ENCODE measurements at regions of chr7 and their contacts with region 1.

Region 1: DNA sequence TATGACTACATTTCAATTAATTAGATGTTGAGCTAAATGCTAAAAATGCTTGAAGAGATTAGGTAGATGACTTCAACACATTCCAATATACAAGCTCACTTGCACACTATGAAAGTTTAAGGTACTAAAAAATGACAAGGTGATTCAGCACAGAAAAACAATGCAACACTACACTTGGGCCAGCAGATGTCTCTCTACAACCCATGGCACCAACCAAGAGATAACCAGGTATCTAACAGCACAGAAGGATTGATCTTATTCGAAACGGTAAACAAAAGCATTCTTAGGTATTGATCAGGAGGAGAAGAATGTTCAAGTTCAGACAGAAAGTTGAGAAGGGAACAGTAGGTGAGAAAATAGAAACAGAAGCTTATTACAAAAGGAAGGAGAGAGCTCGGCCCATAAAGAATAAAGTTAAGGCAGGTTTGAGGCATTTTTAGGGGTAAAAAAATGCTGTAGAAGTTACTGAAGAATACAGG is 248.2 kb upstream of the KLF14 start:
- DNase-seq: no peak
- ATAC-seq: peak; percentile 94
- H3K4me3 Mint-ChIP-seq: no peak overlapping the region
- H3K27ac Mint-ChIP-seq: no peak overlapping the region
- H3K4me1 Mint-ChIP-seq: peaks cover 21% of the 10 kb centered on the region
- H3K27me3 Mint-ChIP-seq: no peaks in the 10 kb centered on the region
- CTCF ChIP-seq: no peak

Region 2: DNA sequence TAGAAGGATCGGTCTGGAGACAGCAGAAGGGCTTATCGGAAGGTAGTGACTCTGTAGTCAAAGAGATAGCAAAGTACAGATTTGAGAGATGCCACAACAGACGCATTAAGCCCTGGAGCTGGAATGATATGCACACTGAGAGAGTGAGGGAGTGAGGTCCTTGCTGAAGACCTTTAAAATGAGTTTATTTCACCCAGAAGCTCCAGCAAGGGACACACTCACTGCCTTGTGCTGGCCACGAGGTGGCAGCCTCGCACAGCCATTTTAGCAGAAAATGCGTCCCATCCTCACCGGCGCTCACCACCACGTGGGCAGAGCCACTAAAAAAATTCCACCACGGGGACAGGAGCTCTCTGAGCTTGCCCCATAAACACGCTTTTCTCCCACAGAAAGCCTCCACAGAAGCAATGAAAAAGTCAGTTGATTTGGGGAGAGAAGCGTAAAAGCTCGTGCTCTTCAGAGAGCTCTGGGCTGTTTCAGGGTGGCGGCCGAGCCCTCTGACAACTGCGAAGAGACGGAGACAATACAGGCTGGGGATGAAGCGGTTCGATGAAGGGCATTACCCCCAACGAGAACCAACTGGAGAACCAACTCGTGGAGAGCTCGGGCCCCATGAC is 85.2 kb before region 1 on chr7:
- CTCF ChIA-PET with region 1: interaction called, 39 read pairs
- POLR2A ChIA-PET with region 1: interaction called, 3 read pairs
- intact Hi-C with region 1: loop called (anchors 1 kb)
- DNase-seq: peak; percentile 54
- ATAC-seq: peak; percentile 64
- H3K4me3 Mint-ChIP-seq: peak overlapping the region; percentile 59
- H3K27ac Mint-ChIP-seq: peak overlapping the region; percentile 84
- H3K4me1 Mint-ChIP-seq: peaks cover 85% of the 10 kb centered on the region
- H3K27me3 Mint-ChIP-seq: no peaks in the 10 kb centered on the region
- CTCF ChIP-seq: peak; percentile 51

Region 3: GRCh38 chr7:130961128-130961601 is 21.0 kb before region 1 on chr7:
- CTCF ChIA-PET with region 1: interaction called, 19 read pairs
- POLR2A ChIA-PET with region 1: interaction called, 8 read pairs
- intact Hi-C with region 1: loop called (anchors 1 kb)
- DNase-seq: peak; percentile 54
- ATAC-seq: peak; percentile 78
- H3K4me3 Mint-ChIP-seq: peak overlapping the region; percentile 87
- H3K27ac Mint-ChIP-seq: peak overlapping the region; percentile 98
- H3K4me1 Mint-ChIP-seq: peaks cover 69% of the 10 kb centered on the region
- H3K27me3 Mint-ChIP-seq: no peaks in the 10 kb centered on the region
- CTCF ChIP-seq: no peak

Region 4: DNA sequence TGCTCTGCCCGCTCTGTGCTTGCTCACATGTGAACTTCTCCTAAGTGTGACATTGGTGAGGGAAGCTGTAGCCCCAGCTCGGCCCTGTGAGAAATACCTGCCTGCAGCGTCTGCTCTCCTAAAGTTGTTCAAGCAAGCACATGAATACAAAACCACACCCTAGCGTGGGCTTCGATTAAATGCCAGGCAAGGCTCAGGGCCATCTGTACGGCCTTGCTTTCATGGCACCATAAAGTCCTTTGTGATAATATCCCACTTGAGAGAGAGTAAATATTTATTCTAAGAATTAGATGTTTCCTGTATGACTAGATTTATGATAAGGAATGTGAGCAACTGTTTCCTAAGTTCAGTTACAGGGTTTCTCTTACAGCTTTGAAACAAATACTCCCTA is 14.6 kb after region 1 on chr7:
- CTCF ChIA-PET with region 1: interaction called, 33 read pairs
- POLR2A ChIA-PET with region 1: interaction called, 17 read pairs
- intact Hi-C with region 1: loop called (anchors 1 kb)
- DNase-seq: no peak
- ATAC-seq: peak; percentile 81
- H3K4me3 Mint-ChIP-seq: peak overlapping the region; percentile 4
- H3K27ac Mint-ChIP-seq: peak overlapping the region; percentile 79
- H3K4me1 Mint-ChIP-seq: peaks cover 77% of the 10 kb centered on the region
- H3K27me3 Mint-ChIP-seq: no peaks in the 10 kb centered on the region
- CTCF ChIP-seq: no peak

Region 5: GRCh38 chr7:131027287-131027773 is 45.1 kb after region 1 on chr7:
- CTCF ChIA-PET with region 1: interaction called, 12 read pairs
- POLR2A ChIA-PET with region 1: no interaction called
- intact Hi-C with region 1: no loop called
- DNase-seq: no peak
- ATAC-seq: peak; percentile 6
- H3K4me3 Mint-ChIP-seq: peak overlapping the region; percentile 66
- H3K27ac Mint-ChIP-seq: peak overlapping the region; percentile 98
- H3K4me1 Mint-ChIP-seq: peaks cover 93% of the 10 kb centered on the region
- H3K27me3 Mint-ChIP-seq: no peaks in the 10 kb centered on the region
- CTCF ChIP-seq: no peak

Region 6: GRCh38 chr7:131057015-131057793 is 75.0 kb after region 1 on chr7:
- CTCF ChIA-PET with region 1: interaction called, 13 read pairs
- POLR2A ChIA-PET with region 1: interaction called, 3 read pairs
- intact Hi-C with region 1: no loop called
- DNase-seq: no peak
- ATAC-seq: peak; percentile 59
- H3K4me3 Mint-ChIP-seq: peak overlapping the region; percentile 76
- H3K27ac Mint-ChIP-seq: peak overlapping the region; percentile 97
- H3K4me1 Mint-ChIP-seq: peaks cover 79% of the 10 kb centered on the region
- H3K27me3 Mint-ChIP-seq: no peaks in the 10 kb centered on the region
- CTCF ChIP-seq: no peak

Region 7: GRCh38 chr7:131219312-131220041 is 237.3 kb after region 1 on chr7:
- CTCF ChIA-PET with region 1: no interaction called
- POLR2A ChIA-PET with region 1: no interaction called
- intact Hi-C with region 1: no loop called
- DNase-seq: no peak
- ATAC-seq: no peak
- H3K4me3 Mint-ChIP-seq: peak overlapping the region; percentile 26
- H3K27ac Mint-ChIP-seq: peak overlapping the region; percentile 78
- H3K4me1 Mint-ChIP-seq: peaks cover 30% of the 10 kb centered on the region
- H3K27me3 Mint-ChIP-seq: no peaks in the 10 kb centered on the region
- CTCF ChIP-seq: no peak

Region 8: GRCh38 chr7:131424219-131424822 is 442.1 kb after region 1 on chr7:
- CTCF ChIA-PET with region 1: interaction called, 7 read pairs
- POLR2A ChIA-PET with region 1: no interaction called
- intact Hi-C with region 1: loop called (anchors 5 kb)
- DNase-seq: no peak
- ATAC-seq: peak; percentile 81
- H3K4me3 Mint-ChIP-seq: no peak overlapping the region
- H3K27ac Mint-ChIP-seq: no peak overlapping the region
- H3K4me1 Mint-ChIP-seq: peaks cover 2% of the 10 kb centered on the region
- H3K27me3 Mint-ChIP-seq: no peaks in the 10 kb centered on the region
- CTCF ChIP-seq: no peak

Region 9: DNA sequence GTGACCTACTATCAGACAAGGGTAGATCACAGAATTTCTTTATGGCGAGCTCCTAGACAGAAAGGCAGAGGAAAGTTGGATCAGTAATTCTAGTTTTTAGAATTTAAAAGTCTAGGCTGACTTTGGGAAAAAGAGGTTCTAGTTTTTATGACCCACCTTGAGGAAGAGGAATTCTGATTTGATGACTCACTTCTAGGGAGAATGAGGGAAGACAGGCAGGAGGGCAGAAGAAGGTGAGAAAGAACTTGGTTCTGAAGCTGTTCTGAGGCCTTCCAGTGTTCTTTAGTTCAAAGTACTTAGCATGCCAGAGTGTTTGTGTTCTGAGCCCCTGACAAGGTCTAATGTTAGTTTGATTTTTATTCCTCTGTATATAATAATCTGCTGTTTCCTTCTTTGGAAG is 477.1 kb after region 1 on chr7:
- CTCF ChIA-PET with region 1: no interaction called
- POLR2A ChIA-PET with region 1: no interaction called
- intact Hi-C with region 1: no loop called
- DNase-seq: no peak
- ATAC-seq: no peak
- H3K4me3 Mint-ChIP-seq: no peak overlapping the region
- H3K27ac Mint-ChIP-seq: no peak overlapping the region
- H3K4me1 Mint-ChIP-seq: peaks cover 16% of the 10 kb centered on the region
- H3K27me3 Mint-ChIP-seq: no peaks in the 10 kb centered on the region
- CTCF ChIP-seq: no peak

Measured in activated B cell treated with CpG ODN at 0.5 μM for 24 hours (primary cell).